ENCODE measurements at regions of chr2 and their contacts with region 1.

Region 1: GRCh38 chr2:20231632-20232031 is 6.7 kb upstream of the SDC1 start:
- DNase-seq: peak; percentile 65 to 87
- ATAC-seq: peak; percentile 86 to 88
- H3K4me3 ChIP-seq: no peak overlapping the region
- H3K27ac ChIP-seq: peak overlapping the region; percentile 46 to 76
- H3K4me1 ChIP-seq: peaks cover 16% of the 10 kb centered on the region
- CTCF ChIP-seq: peak; percentile 10; the same call in 1 of the 3 replicates
- EP300 ChIP-seq: no peak
- POLR2A ChIP-seq: no peak
- RAD21 ChIP-seq: 0 out of 5 replicates have a peak, but pooled peaks of 1 of the 2 experiments have one; percentile 16

Region 2: GRCh38 chr2:20242060-20243006 is 10.7 kb after region 1 on chr2:
- CTCF ChIA-PET with region 1: interaction called, 74 read pairs
- POLR2A ChIA-PET with region 1: no interaction called
- DNase-seq: peak in 1 of 2 experiments; percentile 50
- ATAC-seq: peak; percentile 65 to 73
- H3K4me3 ChIP-seq: no peak overlapping the region
- H3K27ac ChIP-seq: no peak overlapping the region
- H3K4me1 ChIP-seq: no peaks in the 10 kb centered on the region
- CTCF ChIP-seq: peak; percentile 58
- EP300 ChIP-seq: no peak
- POLR2A ChIP-seq: no peak
- RAD21 ChIP-seq: 0 out of 5 replicates have a peak, but pooled peaks of 1 of the 2 experiments have one; percentile 23